Colonic mucosa (tissue), 4 donors: ENCODE measurements at regions of chr4 and their contacts with region 1.

Region 1: DNA sequence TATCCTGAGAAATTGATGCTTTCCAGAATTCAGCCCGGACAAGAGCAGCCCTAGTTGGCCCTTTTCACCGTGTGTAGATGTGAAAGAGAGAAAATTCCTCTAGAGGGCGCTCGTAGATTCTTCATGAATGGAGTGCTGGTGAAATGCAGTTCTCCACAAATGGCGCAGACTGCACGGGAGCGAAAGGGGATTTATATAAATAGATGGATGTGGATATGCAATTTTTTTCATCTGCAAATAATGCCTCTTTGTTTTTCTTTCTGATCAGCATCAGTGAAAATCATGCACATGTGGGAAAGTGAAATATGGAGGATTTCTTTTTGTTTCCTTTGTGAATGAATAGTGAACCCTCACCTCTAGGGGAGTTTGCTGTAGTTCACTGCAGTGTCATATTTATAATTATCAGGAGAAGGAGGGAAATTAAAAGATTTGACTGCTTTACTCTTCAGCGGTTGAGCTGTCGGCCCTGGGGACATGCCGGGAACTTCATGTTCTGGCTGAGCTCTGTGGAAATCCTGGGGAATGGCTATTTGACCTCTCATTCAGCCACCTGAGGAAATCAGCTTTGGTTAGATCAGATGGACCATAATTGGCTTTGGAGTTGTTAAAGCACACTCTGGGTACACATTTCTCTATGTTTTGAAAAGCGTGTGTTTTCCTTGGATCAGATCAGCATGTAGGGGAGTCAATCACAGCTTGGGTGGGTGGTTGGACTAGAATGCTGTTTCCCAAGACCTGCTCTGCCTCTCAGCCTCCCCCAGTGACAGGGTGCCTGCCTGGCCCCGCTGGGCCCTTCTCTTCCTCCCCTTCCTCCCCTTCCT is 115.0 kb upstream of the SHISA3 start:
- DNase-seq: peak; percentile 59
- H3K4me3 ChIP-seq: no peak overlapping the region
- H3K27ac ChIP-seq: no peak overlapping the region
- H3K4me1 ChIP-seq: no peaks in the 10 kb centered on the region
- H3K27me3 ChIP-seq: no peaks in the 10 kb centered on the region
- CTCF ChIP-seq: peak; percentile 61

Region 2: DNA sequence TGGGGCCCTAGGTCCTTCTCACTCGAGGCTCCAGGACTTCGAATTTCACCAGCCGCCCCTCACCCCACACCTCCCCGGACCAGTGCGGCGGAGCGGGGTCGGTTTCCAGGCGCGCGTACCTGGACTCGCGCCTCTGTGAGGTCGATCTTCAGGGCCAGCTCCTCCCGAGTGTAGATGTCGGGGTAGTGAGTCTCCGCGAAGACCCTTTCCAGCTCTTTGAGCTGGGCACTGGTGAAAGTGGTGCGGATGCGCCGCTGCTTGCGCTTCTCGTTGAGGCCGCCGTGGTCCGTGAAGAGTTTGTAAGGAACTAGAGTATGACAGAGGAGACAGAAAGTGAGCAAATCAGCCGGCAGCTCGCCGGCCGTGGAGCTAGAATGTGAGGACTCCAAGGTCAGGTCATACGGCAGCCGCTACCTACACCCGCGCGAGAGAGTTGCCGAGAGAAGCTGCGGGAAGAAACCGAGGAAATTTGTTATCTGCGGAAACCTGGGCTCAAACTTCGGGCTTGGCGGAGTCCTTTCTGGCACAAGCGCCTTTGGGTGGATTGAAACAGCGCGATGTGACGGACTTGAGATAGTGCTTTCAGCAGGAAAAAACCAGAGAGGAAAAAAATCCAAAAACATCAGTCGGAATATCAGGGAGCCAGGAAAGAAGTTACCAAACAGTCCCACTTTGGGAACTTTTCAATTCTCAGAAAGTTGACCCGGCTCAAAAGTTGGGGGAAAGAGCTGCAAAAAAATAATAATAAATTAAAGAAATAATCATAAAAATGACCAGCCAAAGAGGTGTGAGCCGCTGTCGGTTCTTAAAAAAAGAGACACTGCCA is 534.8 kb before region 1 on chr4:
- intact Hi-C with region 1: no loop called
- DNase-seq: no peak
- H3K4me3 ChIP-seq: no peak overlapping the region
- H3K27ac ChIP-seq: no peak overlapping the region
- H3K4me1 ChIP-seq: no peaks in the 10 kb centered on the region
- H3K27me3 ChIP-seq: peaks cover 79% of the 10 kb centered on the region
- CTCF ChIP-seq: no peak

Region 3: DNA sequence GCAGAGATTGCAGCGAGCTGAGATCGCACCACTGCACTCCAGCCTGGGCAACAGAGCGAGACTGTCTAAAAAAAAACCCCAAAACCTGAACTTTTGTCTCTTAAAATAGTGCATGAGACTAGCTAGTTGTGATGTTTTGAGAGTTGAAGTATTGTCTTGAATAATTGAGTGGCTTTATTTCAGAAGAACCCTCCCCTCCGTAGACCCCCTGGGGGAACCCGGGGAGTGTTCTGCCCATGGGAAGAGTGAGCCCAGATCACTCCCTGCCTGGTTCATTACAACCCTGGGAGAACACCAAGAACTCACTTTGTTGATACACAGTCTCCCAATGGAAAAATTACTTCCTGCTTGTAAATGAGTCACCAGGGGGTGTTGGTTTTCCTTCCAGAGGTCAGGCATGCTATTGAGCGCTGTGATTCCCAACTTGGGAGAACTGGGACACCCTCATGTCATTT is 49.6 kb after region 1 on chr4:
- intact Hi-C with region 1: no loop called
- DNase-seq: no peak
- H3K4me3 ChIP-seq: no peak overlapping the region
- H3K27ac ChIP-seq: no peak overlapping the region
- H3K4me1 ChIP-seq: no peaks in the 10 kb centered on the region
- H3K27me3 ChIP-seq: no peaks in the 10 kb centered on the region
- CTCF ChIP-seq: no peak

Region 4: GRCh38 chr4:42412251-42412650 is 130.0 kb after region 1 on chr4:
- intact Hi-C with region 1: no loop called
- DNase-seq: no peak
- H3K4me3 ChIP-seq: no peak overlapping the region
- H3K27ac ChIP-seq: no peak overlapping the region
- H3K4me1 ChIP-seq: no peaks in the 10 kb centered on the region
- H3K27me3 ChIP-seq: no peaks in the 10 kb centered on the region
- CTCF ChIP-seq: no peak

Region 5: GRCh38 chr4:42865572-42866189 is 583.4 kb after region 1 on chr4:
- intact Hi-C with region 1: loop called (anchors 10 kb)
- DNase-seq: peak; percentile 56
- H3K4me3 ChIP-seq: no peak overlapping the region
- H3K27ac ChIP-seq: no peak overlapping the region
- H3K4me1 ChIP-seq: no peaks in the 10 kb centered on the region
- H3K27me3 ChIP-seq: no peaks in the 10 kb centered on the region
- CTCF ChIP-seq: peak; percentile 69

Region 6: DNA sequence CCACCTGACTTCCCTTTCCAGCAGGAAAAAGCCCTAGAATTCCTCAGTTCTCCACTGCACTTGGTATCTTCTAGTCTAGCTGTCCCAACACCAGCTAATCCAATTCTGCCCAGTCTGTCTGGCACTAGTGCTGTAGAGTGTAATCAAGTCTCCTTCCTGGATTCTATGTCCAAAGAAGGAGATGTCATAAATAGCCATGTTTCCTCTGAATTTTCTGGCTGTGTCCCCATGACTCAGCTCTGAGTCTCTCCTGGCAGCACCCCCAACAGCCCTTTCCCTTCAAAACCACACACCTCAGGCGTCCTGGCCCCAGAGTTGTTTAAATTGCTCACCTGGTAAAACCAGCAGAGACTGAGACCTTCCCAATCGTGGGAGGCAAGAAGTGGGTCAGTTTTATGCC is 807.4 kb after region 1 on chr4:
- intact Hi-C with region 1: no loop called
- DNase-seq: no peak
- H3K4me3 ChIP-seq: no peak overlapping the region
- H3K27ac ChIP-seq: no peak overlapping the region
- H3K4me1 ChIP-seq: no peaks in the 10 kb centered on the region
- H3K27me3 ChIP-seq: no peaks in the 10 kb centered on the region
- CTCF ChIP-seq: no peak